ENCODE measurements at regions of chr21 and their contacts with region 1.

Region 1: GRCh38 chr21:20875742-20876141 is 122.5 kb upstream of the NCAM2 start:
- DNase-seq: no peak
- ATAC-seq: no peak
- H3K4me3 ChIP-seq: no peak overlapping the region
- H3K27ac ChIP-seq: no peak overlapping the region
- H3K4me1 ChIP-seq: no peaks in the 10 kb centered on the region
- H3K27me3 ChIP-seq: no peaks in the 10 kb centered on the region
- CTCF ChIP-seq: no peak
- POLR2A ChIP-seq: no peak

Region 2: DNA sequence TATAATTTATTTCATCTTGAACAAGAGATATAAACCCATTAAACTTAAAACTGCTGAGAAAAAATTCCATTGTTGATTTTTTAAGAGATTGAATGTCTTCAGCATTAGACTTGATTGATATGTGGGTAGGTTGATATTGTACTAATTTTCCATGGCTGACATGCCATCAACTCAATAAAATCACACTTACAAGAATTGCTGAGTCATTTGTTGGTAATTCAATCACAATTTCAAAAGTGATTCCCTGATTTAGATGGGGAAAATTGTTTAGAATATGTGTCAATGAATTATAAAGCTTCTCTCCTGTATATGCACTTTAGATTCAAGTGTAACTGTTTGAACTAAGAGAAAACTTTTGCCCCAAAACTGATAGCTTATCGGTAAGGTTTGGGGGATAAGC is 101.0 kb before region 1 on chr21:
- intact Hi-C with region 1: no loop called
- DNase-seq: no peak
- ATAC-seq: no peak
- H3K4me3 ChIP-seq: no peak overlapping the region
- H3K27ac ChIP-seq: no peak overlapping the region
- H3K4me1 ChIP-seq: no peaks in the 10 kb centered on the region
- H3K27me3 ChIP-seq: no peaks in the 10 kb centered on the region
- CTCF ChIP-seq: no peak
- POLR2A ChIP-seq: no peak

Region 3: GRCh38 chr21:20811702-20812101 is 64.0 kb before region 1 on chr21:
- intact Hi-C with region 1: loop called in 1 of 10 experiments (anchors 10 kb)
- DNase-seq: no peak
- ATAC-seq: no peak
- H3K4me3 ChIP-seq: no peak overlapping the region
- H3K27ac ChIP-seq: no peak overlapping the region
- H3K4me1 ChIP-seq: no peaks in the 10 kb centered on the region
- H3K27me3 ChIP-seq: no peaks in the 10 kb centered on the region
- CTCF ChIP-seq: no peak
- POLR2A ChIP-seq: no peak